Calu3 (cell line): ENCODE measurements at regions of chr2 and their contacts with region 1.

Region 1: GRCh38 chr2:154375579-154375931 is 322.9 kb upstream of the KCNJ3 start:
- DNase-seq: peak; percentile 8
- H3K4me3 Mint-ChIP-seq: peak overlapping the region; percentile 51
- H3K27ac Mint-ChIP-seq: no peak overlapping the region
- H3K4me1 Mint-ChIP-seq: no peaks in the 10 kb centered on the region
- H3K27me3 Mint-ChIP-seq: no peaks in the 10 kb centered on the region
- CTCF ChIP-seq: peak; percentile 49

Region 2: DNA sequence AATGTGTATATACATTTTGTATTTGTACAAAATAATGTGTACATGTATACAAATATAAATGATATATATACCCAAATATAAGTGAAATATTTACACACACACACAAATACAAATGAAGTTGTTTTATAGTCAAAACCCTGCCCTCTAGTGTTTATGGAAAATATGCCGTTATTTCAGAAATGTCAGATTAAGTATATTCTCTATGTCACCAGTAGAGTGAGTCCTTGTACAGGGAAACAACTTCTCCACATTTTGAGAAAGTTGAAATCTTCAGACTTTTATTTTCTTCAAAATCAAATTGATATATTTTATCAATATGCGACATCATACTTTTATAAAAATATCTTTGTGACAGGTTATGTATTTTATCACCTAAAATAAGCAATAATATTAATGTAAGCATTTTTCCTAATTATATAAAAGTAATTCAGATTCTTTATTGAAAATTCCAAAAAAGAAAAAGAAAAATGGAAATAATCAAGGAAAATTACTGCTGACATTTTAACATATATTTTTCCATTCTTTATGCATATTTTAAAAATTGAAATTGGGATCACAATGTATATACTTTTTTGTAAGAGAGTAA is 1634.7 kb before region 1 on chr2:
- CTCF ChIA-PET with region 1: no interaction called
- intact Hi-C with region 1: loop called (anchors 10 kb)
- DNase-seq: no peak
- H3K4me3 Mint-ChIP-seq: no peak overlapping the region
- H3K27ac Mint-ChIP-seq: no peak overlapping the region
- H3K4me1 Mint-ChIP-seq: no peaks in the 10 kb centered on the region
- H3K27me3 Mint-ChIP-seq: no peaks in the 10 kb centered on the region
- CTCF ChIP-seq: peak; percentile 74

Region 3: DNA sequence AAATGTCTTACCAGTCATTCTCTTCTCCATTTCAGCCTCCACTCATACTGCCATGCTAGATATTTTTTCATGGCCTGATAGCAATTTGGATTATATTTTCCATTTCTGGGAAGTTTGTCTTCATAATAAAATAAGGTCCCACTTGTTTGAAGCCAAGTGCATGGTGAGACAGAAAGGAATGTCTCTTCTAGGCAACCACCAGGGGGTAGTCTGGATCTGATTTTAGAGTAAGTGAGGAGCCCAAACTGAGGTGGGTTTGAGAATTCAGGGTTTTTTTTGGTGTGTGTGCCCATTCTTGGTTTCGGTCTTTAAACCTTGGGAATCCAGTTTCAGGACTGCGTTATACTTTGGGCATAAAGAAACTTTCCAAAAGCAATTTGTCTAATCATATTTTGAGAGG is 1212.5 kb before region 1 on chr2:
- CTCF ChIA-PET with region 1: no interaction called
- intact Hi-C with region 1: loop called (anchors 5 kb)
- DNase-seq: peak; percentile 67
- H3K4me3 Mint-ChIP-seq: no peak overlapping the region
- H3K27ac Mint-ChIP-seq: no peak overlapping the region
- H3K4me1 Mint-ChIP-seq: peaks cover 13% of the 10 kb centered on the region
- H3K27me3 Mint-ChIP-seq: no peaks in the 10 kb centered on the region
- CTCF ChIP-seq: peak; percentile 57

Region 4: GRCh38 chr2:153770359-153770991 is 605.1 kb before region 1 on chr2:
- CTCF ChIA-PET with region 1: interaction called, 3 read pairs
- intact Hi-C with region 1: loop called (anchors 1 kb)
- DNase-seq: peak; percentile 7
- H3K4me3 Mint-ChIP-seq: no peak overlapping the region
- H3K27ac Mint-ChIP-seq: no peak overlapping the region
- H3K4me1 Mint-ChIP-seq: no peaks in the 10 kb centered on the region
- H3K27me3 Mint-ChIP-seq: no peaks in the 10 kb centered on the region
- CTCF ChIP-seq: peak; percentile 20

Region 5: GRCh38 chr2:153875801-153876466 is 499.6 kb before region 1 on chr2:
- CTCF ChIA-PET with region 1: no interaction called
- intact Hi-C with region 1: loop called (anchors 5 kb)
- DNase-seq: no peak
- H3K4me3 Mint-ChIP-seq: no peak overlapping the region
- H3K27ac Mint-ChIP-seq: no peak overlapping the region
- H3K4me1 Mint-ChIP-seq: no peaks in the 10 kb centered on the region
- H3K27me3 Mint-ChIP-seq: no peaks in the 10 kb centered on the region
- CTCF ChIP-seq: no peak